GM12878 (cell line): ENCODE measurements at regions of chr20 and their contacts with region 1.

Region 1: GRCh38 chr20:19915111-19915798 is 101.9 kb upstream of the NAA20 start:
- DNase-seq: no peak
- ATAC-seq: peak; percentile 52
- H3K4me3 ChIP-seq: no peak overlapping the region
- H3K27ac ChIP-seq: peak overlapping the region; percentile 49
- H3K4me1 ChIP-seq: peaks cover 71% of the 10 kb centered on the region
- H3K27me3 ChIP-seq: no peaks in the 10 kb centered on the region
- CTCF ChIP-seq: no peak
- EP300 ChIP-seq: no peak
- POLR2A ChIP-seq: no peak
- RAD21 ChIP-seq: no peak

Region 2: GRCh38 chr20:19947611-19948264 is 32.5 kb after region 1 on chr20:
- CTCF ChIA-PET with region 1: interaction called, 4 read pairs
- POLR2A ChIA-PET with region 1: interaction called, 4 read pairs
- RAD21 ChIA-PET with region 1: interaction called, 14 read pairs
- SMC1A ChIA-PET with region 1: interaction called, 25 read pairs
- in situ Hi-C with region 1: no loop called
- intact Hi-C with region 1: loop called (anchors 1 kb)
- DNase-seq: peak; percentile 40
- ATAC-seq: peak; percentile 81
- H3K4me3 ChIP-seq: no peak overlapping the region
- H3K27ac ChIP-seq: no peak overlapping the region
- H3K4me1 ChIP-seq: peaks cover 28% of the 10 kb centered on the region
- H3K27me3 ChIP-seq: 0 out of 4 replicates have a peak, but pooled peaks cover 0 to 2% of the 10 kb centered on the region in 2 experiments
- CTCF ChIP-seq: no peak
- EP300 ChIP-seq: peak; percentile 66 to 86; a peak in 3 of 4 replicates
- POLR2A ChIP-seq: no peak
- RAD21 ChIP-seq: 0 out of 2 replicates have a peak, but pooled peaks have one; percentile 14